ENCODE measurements at regions of chr16 and their contacts with region 1.

Region 1: GRCh38 chr16:46908540-46909372 is 24.6 kb downstream of the GPT2 start:
- DNase-seq: peak; percentile 48
- ATAC-seq: peak; percentile 68 to 70

Region 2: GRCh38 chr16:46673320-46674013 is 235.3 kb before region 1 on chr16:
- intact Hi-C with region 1: loop called in 1 of 2 experiments (anchors 5 kb)
- DNase-seq: peak; percentile 37
- ATAC-seq: peak; percentile 82 to 91

Region 3: DNA sequence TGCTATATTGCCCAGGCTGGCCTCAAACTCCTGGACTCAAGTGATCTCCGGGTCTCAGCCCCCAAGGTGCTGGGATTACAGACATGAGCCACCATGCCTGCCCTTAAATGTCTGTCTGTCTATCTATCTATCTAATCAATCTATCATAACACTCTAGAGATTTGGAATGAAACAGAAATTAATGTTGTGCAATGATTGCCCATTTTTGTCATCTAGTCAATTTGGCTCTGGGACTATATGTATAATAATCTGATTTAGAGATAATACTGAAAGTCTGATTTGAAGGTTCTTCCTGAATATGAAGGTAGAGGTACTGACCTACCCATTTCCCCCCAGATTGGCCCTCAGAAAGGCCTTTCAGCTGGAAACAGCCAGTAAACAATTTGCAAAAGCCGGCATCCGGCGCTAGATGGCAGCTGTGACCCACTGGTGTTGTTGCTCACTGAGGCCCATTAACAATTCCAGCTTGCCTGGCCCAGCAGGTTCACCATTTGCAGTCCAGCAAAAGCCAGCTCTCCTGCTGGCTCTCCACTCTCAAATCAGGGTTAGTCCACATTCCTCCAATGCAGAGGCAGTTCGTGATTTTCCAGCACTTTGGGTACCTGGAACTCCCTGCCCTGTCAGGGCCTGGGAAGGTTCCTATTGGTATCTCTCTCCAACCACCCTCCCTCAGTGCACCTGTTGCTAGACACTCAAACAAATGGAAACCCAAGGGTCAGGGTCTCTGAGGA is 54.9 kb before region 1 on chr16:
- intact Hi-C with region 1: loop called (anchors 1 to 2 kb)
- DNase-seq: peak; percentile 75
- ATAC-seq: peak; percentile 83 to 87

Region 4: DNA sequence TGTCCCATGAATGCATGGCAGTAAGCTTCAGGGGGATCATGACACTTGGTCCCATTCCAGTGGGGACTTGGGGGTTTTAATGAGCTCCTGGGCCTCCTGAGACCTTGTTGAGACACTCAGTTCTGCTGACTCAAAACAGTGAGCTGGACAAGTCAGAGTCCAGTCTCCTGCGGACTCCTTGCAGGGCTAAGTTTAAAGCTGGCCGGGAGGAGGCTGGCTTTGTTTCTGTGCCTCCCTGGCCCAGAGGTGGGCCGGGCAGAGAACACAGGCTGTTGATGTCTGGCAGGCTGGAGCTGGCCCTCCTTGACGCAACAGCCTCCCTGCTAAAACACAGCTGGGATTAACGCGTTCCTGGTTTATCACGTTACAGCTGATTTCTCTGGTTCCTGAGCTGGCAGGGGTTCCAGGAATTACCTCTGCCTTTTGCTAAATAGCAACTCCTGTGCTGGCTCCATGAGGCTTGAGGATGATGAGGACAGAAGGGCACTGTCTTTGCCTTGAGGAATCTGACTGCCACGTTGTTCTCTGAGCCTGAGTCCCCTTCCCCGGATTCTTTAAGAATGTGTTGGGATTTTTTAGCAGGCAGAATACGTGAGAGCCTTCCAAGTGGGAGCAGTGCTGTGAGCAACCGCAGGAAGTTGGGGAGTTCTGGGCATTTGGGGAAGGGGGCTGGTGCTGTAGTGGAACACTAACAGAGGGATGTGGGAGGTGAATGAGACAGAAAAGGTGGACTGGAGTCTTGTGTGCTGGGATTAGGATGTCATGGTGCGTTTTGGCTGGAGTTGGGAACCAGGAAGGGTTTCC is 22.6 kb before region 1 on chr16:
- intact Hi-C with region 1: loop called in 1 of 2 experiments (anchors 2 kb)
- DNase-seq: peak; percentile 47
- ATAC-seq: peak; percentile 6 to 12

Region 5: GRCh38 chr16:46947900-46948547 is 39.3 kb after region 1 on chr16:
- intact Hi-C with region 1: no loop called
- DNase-seq: no peak
- ATAC-seq: peak; percentile 47 to 51

Measured in left cardiac atrium (tissue), 4 donors.